ENCODE measurements at regions of chr3 and their contacts with region 1.

Region 1: GRCh38 chr3:69324362-69325025 is 61.4 kb downstream of the FRMD4B start:
- DNase-seq: no peak
- ATAC-seq: peak in 2 of 8 donors; percentile 59 to 63
- H3K4me3 ChIP-seq: no peak overlapping the region
- H3K27ac ChIP-seq: peak overlapping the region in 3 of 10 donors; percentile 41 to 82 (median 54)
- H3K4me1 ChIP-seq: peaks cover 0 to 99% (median 67%) of the 10 kb centered on the region in 9 donors
- H3K27me3 ChIP-seq: no peaks in the 10 kb centered on the region
- CTCF ChIP-seq: peak in 8 of 9 donors; percentile 30 to 66 (median 54)

Region 2: DNA sequence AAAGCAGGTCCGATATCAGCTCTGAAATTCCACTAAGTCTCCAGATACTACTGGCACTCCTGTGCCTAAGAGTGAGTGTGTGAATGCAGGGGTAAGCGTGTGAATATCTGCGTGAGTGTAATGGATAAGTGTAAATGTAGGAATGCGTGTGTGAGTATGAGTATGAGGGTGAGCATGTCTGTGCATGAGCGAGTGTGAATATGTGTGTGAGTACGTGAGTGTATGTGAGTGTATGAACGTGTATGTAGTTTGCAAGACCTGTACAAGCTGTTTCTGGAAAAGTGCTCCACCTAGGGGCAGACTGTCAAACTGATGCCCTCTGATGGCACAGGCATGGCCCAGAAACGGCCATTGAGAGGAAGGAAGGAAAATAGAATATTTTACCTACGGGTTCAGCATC is 85.8 kb after region 1 on chr3:
- intact Hi-C with region 1: loop called (anchors 2 to 10 kb)
- DNase-seq: peak in 1 of 2 donors; percentile 85
- ATAC-seq: peak; percentile 78 to 92 (median 86)
- H3K4me3 ChIP-seq: peak overlapping the region in 4 of 10 donors; percentile 14 to 37 (median 26)
- H3K27ac ChIP-seq: peak overlapping the region in 4 of 10 donors; percentile 53 to 78 (median 62)
- H3K4me1 ChIP-seq: peaks cover 0 to 46% (median 28%) of the 10 kb centered on the region in 9 donors
- H3K27me3 ChIP-seq: no peaks in the 10 kb centered on the region
- CTCF ChIP-seq: peak; percentile 66 to 89 (median 81)

Region 3: GRCh38 chr3:69419276-69419675 is 94.8 kb after region 1 on chr3:
- intact Hi-C with region 1: loop called in 6 of 10 experiments (anchors 5 to 10 kb)
- DNase-seq: no peak
- ATAC-seq: no peak
- H3K4me3 ChIP-seq: no peak overlapping the region
- H3K27ac ChIP-seq: no peak overlapping the region
- H3K4me1 ChIP-seq: peaks cover 0 to 25% (median 13%) of the 10 kb centered on the region in 9 donors
- H3K27me3 ChIP-seq: no peaks in the 10 kb centered on the region
- CTCF ChIP-seq: no peak